Left cardiac atrium (tissue), 4 donors: ENCODE measurements at regions of chr1 and their contacts with region 1.

Region 1: DNA sequence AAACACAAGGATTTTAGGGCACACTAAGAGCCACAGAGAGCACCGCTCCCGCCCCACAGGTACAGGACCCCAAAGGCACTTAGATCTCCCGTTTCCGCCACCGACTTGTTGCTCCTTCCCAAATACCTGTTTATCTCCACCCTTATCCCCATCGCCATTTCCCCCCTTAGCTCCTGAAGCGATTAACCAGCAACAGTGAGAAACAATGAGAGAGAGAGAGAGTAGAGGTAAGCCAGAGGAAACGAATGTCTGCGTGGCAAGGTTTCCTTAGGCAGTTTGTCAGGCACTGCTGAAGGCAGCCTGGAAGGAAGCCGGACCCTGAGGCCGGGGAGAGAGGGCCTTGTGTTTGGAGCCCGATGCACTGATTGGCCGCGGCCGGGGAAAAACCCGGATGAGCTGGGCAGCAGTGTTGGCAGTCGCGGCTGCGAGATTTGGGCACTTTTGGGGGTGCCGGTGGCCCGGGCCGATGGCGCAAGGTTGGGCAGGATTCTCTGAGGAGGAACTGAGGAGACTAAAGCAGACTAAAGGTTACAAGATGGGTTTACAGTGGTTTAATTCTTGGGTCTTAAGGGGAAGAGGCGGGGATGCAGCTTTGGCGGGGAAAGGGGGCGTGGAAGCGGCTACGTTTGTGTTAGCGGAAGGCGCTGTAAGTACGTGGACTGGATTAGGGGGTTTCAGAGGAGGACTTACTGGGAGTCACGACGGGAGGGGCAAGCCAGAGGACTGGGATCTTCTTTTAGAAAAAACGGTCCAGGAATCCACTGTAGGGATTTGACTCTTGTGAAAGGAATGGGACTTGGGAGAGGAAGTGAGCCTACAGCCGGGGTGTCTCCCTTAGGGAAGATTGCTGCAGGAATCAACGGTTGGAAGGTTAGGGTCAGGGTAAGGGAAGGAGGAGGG is at the start of gene GORAB:
- DNase-seq: peak; percentile 94
- ATAC-seq: peak; percentile 99
- total RNA-seq, gene GORAB: 7.0 to 8.3 TPM

Region 2: GRCh38 chr1:170664828-170665612 is 133.0 kb after region 1 on chr1:
- intact Hi-C with region 1: loop called (anchors 5 to 10 kb)
- DNase-seq: peak; percentile 48
- ATAC-seq: peak; percentile 58 to 72

Region 3: GRCh38 chr1:170749549-170749948 is 217.5 kb after region 1 on chr1:
- intact Hi-C with region 1: no loop called
- DNase-seq: no peak
- ATAC-seq: no peak